ENCODE measurements at regions of chr19 and their contacts with region 1.

Region 1: GRCh38 chr19:5977785-5978605 is at the start of gene RANBP3:
- DNase-seq: peak; percentile 98
- ATAC-seq: peak; percentile 98
- H3K4me3 Mint-ChIP-seq: peak within 1 kb of the TSS; percentile 98
- H3K27ac Mint-ChIP-seq: peak within 1 kb of the TSS; percentile 95
- H3K4me1 Mint-ChIP-seq: peaks cover 49% of the 10 kb centered on the region
- H3K27me3 Mint-ChIP-seq: no peaks in the 10 kb centered on the region
- total RNA-seq, gene RANBP3: 104 to 108 TPM

Region 2: DNA sequence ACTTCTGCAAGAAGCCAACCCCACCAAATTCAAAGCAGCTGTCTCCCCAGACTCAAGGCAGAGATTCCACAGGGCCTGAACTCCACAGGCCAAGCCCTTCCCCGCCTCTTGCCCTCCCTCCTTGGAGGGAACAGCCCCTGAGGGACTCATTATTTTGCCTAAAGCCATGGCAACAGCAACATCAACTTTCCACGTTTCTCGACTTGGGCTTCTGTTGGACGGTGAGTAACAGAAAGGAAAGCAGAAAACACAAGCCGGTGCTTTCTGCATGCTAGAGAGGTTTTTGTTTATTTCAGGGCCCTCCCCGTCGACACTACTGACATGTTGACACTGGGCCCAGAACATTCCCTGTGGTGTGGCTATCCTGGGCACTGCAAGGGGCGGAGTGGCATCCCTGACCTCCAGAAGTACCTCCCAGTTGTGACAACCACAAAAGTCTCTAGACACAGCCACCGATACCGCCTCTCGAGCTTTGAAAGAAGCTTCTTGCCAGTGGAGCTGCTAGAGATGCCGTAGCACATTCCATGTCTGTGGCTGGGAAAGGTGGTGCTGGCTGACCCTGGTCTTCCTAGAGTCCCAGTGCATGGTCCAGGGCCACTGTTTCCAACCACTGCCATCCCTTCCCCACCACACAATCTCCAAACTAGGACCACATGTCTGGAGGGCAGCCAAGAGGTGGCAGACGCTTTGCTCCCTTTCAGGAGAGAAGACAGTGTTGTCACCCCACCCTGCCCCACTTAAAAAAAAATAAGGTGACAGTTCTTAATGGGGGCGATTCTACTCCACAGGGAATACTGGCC is 51.2 kb before region 1 on chr19:
- POLR2A ChIA-PET with region 1: no interaction called
- DNase-seq: no peak
- ATAC-seq: no peak
- H3K4me3 Mint-ChIP-seq: no peak overlapping the region
- H3K27ac Mint-ChIP-seq: no peak overlapping the region
- H3K4me1 Mint-ChIP-seq: peaks cover 2% of the 10 kb centered on the region
- H3K27me3 Mint-ChIP-seq: no peaks in the 10 kb centered on the region

Region 3: GRCh38 chr19:5961969-5962945 is 15.7 kb before region 1 on chr19:
- POLR2A ChIA-PET with region 1: interaction called, 10 read pairs
- DNase-seq: peak; percentile 71
- ATAC-seq: peak; percentile 94
- H3K4me3 Mint-ChIP-seq: peak overlapping the region; percentile 71
- H3K27ac Mint-ChIP-seq: peak overlapping the region; percentile 95
- H3K4me1 Mint-ChIP-seq: peaks cover 63% of the 10 kb centered on the region
- H3K27me3 Mint-ChIP-seq: no peaks in the 10 kb centered on the region

Measured in activated naive CD8-positive, alpha-beta T cell treated with anti-CD3 and anti-CD28 coated beads, Interleukin-2, amount 10 ng/mL, durations not matched to agents 7 days and 5 days (primary cell).